ENCODE measurements at regions of chr2 and their contacts with region 1.

Region 1: GRCh38 chr2:118186110-118186857 is 98.0 kb downstream of the INSIG2 start:
- DNase-seq: peak; percentile 70 to 90
- H3K4me3 ChIP-seq: peak overlapping the region; percentile 71 to 83 (median 75)
- H3K27ac ChIP-seq: peak overlapping the region; percentile 90
- H3K4me1 ChIP-seq: peaks cover 4 to 9% (median 5%) of the 10 kb centered on the region in 4 experiments
- H3K27me3 ChIP-seq: peaks cover 0 to 2% (median 0%) of the 10 kb centered on the region in 4 experiments; a peak in 1 of 7 replicates
- CTCF ChIP-seq: 0 out of 4 replicates have a peak, but pooled peaks of 1 of the 3 experiments have one; percentile 10
- EP300 ChIP-seq: no peak
- POLR2A ChIP-seq: peak; percentile 72 to 87
- RAD21 ChIP-seq: no peak

Region 2: DNA sequence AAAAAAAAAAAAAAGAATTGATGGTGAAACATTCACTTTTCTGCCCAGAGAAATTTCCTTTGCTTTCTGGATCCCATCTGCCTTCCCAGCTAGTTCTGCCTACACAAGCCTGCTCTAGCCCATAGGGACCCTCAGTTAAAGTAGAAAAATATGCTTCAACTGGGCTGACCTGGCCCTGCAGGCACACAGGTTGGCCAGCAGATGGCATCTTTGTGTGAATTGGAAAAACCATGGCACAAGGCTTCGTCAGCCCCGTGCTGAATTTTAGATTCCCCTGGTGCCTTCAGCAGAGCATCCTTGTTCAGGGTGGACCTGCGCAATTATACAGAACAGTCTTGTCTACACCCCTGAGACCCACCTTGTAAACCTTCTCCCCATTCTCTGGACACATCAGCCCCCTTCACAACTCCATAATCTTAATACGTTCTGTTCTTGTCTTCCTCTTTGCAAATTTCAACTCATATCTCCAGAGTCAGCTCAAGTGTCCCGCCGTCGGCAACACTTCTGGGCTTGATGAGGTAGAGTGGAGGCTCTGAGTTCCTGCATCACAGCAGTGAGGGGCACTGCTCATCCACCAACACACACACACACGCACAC is 16.5 kb after region 1 on chr2:
- CTCF ChIA-PET with region 1: interaction called, 20 read pairs
- POLR2A ChIA-PET with region 1: interaction called, 11 read pairs
- DNase-seq: peak in 1 of 2 experiments; percentile 77
- H3K4me3 ChIP-seq: no peak overlapping the region
- H3K27ac ChIP-seq: no peak overlapping the region
- H3K4me1 ChIP-seq: no peaks in the 10 kb centered on the region
- H3K27me3 ChIP-seq: peaks cover 0 to 3% (median 0%) of the 10 kb centered on the region in 4 experiments; a peak in 1 of 7 replicates
- CTCF ChIP-seq: peak; percentile 82 to 97 (median 88)
- EP300 ChIP-seq: no peak
- POLR2A ChIP-seq: no peak
- RAD21 ChIP-seq: peak; percentile 74 to 84

Measured in H1 (cell line).